Posterior cingulate gyrus (tissue), 11 donors: ENCODE measurements at regions of chr20 and their contacts with region 1.

Region 1: GRCh38 chr20:62818592-62819493 is 2.0 kb downstream of the COL9A3 start:
- DNase-seq: peak in 9 of 10 donors; percentile 59 to 95 (median 71)

Region 2: DNA sequence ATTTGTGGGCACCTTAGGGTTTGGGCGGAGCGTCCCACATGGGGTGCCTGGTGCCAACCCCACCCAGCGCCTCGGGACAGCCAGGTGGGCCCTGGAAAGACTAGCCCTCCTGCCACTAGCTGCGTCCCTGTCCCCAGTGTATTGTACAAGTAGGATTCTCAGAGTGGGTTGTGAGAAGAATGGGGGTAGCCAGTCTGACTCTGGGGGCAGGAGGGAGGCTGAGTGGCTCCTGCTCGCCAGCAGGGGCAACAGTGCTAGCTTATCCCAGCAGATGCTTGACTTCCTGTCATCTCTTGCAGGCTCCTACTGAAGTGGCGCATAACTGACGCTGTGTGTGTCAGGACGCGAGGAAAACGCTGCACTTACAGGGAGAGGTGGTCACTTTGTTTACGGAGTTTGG is 685.0 kb before region 1 on chr20:
- intact Hi-C with region 1: no loop called
- DNase-seq: no peak

Region 3: DNA sequence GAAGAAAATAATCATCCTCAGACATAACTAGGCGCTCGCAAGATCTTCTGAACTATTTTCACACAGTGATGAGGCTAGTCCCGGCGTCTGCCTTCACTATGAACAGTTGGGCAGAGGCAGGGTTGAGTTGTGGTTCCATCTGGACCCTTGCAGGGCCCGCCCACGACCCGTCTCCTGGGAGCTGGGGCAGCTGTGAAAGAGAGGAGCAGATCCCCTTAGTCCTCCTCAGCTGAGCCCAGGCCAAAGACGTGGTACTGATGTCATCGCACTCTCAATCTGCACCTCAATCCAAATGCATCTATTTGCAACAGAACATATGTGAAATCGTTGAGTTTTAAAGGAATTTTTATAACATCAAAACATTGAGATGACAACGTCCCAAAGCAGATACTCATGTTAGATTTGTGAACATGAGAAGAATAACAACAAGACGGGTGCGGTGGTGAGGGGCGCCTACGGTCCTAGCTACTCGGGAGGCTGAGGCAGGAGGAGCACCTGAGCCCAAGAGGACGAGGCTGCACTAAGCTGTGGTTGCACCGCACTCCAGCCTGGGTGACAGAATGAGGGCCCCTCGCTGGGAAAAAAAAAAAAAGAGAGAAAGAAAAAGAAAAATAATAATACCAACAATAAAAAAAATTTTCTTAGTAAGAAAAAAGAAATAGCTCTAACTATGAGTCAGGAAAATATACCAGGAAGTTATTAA is 27.5 kb after region 1 on chr20:
- intact Hi-C with region 1: loop called (anchors 5 kb)
- DNase-seq: peak in 8 of 10 donors; percentile 50 to 95 (median 72)